ENCODE measurements at regions of chr9 and their contacts with region 1.

Region 1: DNA sequence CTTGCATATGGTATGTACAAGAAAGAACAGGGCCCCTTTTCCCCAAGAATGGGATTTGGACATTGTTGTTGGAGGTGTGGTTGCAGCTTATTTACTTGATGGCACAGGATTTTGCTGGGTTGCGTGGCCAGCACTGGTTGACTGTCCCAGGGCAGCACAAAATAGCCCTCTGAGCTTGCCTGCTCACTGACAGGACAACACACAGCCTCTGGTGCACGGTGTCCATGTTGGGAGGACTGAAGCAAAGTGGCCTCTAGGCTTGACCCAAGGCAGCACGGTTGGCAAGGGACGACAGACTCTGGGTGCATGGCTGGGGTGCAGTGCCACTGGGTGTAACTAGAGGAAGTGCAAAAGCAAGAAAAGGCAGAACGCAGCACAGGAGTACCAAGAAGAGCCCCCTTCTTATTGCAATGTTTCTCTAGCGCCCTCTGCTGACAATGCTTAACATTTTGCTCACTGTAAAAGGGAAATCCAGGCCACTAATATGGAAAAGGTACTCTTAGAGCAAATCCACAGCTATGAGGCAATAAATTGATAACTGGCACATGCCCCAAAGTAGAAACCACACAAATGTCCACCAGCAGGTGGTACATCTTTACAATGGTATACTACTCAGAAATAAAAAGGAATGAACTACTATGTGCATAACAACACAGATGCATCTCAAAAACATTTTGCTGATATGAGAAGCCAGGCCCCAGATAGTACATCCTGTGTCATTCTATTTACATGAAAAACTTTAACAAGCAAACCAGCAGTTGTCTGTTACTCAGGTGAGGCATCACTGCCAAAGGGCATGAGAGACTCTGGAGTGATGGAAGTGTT is 47.4 kb upstream of the BARX1 start:
- DNase-seq: peak; percentile 35
- H3K4me3 ChIP-seq: no peak overlapping the region
- H3K27ac ChIP-seq: no peak overlapping the region
- H3K4me1 ChIP-seq: peaks cover 6% of the 10 kb centered on the region
- H3K27me3 ChIP-seq: no peaks in the 10 kb centered on the region
- CTCF ChIP-seq: peak; percentile 54 to 76

Region 2: DNA sequence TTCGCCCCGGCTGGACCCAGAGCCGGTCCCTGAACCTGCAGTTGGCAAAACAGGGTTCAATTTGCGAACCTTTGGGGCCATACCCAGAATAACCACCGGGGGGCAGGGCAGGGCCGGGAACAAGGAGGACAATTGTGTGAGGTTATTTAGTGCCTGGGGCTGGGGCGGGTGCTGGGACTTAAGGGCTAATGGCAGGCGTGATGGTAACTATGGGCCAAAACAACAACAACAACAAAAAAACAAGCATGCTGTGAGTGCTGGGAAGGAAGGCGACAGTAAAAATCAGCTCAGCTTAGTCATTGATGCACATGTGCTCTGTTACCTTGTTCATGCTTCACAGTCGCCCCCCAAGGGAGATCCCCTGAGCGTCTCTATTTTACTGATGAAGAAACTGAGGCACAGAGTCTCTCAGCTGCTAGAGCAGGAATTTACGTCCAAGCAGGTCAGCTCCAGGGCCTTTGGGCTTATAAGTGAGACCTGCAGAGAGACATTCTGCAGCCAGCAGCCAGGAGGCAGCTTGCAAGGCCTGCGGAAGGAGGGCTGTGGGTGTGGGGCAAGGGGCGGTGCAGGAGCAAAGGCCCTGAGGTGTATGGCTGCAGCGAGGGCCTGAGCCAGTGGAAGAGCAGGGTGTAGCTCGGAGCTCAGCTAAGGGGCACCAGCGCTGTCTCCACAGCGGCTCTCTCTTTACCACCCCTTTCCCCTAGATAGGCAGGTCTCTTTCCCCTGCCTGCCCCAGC is 320.1 kb before region 1 on chr9:
- CTCF ChIA-PET with region 1: no interaction called
- dilution Hi-C with region 1: no loop called
- in situ Hi-C with region 1: no loop called
- intact Hi-C with region 1: loop called (anchors 1 kb)
- DNase-seq: peak; percentile 25
- H3K4me3 ChIP-seq: no peak overlapping the region
- H3K27ac ChIP-seq: no peak overlapping the region
- H3K4me1 ChIP-seq: no peaks in the 10 kb centered on the region
- H3K27me3 ChIP-seq: no peaks in the 10 kb centered on the region
- CTCF ChIP-seq: peak; percentile 69 to 82

Region 3: DNA sequence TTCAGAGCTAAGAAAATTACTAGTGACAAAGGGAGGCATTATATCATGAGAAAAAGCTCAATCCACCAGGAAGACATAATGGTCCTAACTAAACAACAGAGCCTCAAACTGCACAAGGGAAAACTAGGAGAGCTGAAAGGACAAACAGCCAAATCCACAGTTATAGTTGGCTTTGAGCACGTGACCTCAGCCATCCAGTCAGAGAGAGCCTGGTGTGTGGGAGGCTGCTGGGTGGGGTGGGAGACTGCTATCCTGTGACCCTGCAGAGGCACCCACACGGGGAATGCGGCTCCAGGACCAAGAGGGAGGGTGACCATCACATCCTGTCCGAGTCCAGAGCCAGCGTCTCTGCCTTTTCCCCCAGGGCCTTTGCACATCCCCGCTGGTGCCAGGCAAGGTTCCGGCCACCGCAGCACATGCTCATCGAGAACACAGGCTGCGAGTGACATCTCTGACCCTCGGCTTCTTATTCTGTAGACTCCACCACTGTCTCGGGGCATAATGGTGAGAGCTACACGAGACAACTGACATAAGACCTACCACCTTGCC is 281.0 kb before region 1 on chr9:
- CTCF ChIA-PET with region 1: no interaction called
- dilution Hi-C with region 1: no loop called
- in situ Hi-C with region 1: no loop called
- intact Hi-C with region 1: no loop called
- DNase-seq: no peak
- H3K4me3 ChIP-seq: no peak overlapping the region
- H3K27ac ChIP-seq: no peak overlapping the region
- H3K4me1 ChIP-seq: no peaks in the 10 kb centered on the region
- H3K27me3 ChIP-seq: no peaks in the 10 kb centered on the region
- CTCF ChIP-seq: no peak

Region 4: GRCh38 chr9:93827545-93828330 is 174.8 kb before region 1 on chr9:
- CTCF ChIA-PET with region 1: interaction called, 6 read pairs
- dilution Hi-C with region 1: no loop called
- in situ Hi-C with region 1: no loop called
- intact Hi-C with region 1: loop called (anchors 1 kb)
- DNase-seq: peak; percentile 24
- H3K4me3 ChIP-seq: no peak overlapping the region
- H3K27ac ChIP-seq: no peak overlapping the region
- H3K4me1 ChIP-seq: no peaks in the 10 kb centered on the region
- H3K27me3 ChIP-seq: no peaks in the 10 kb centered on the region
- CTCF ChIP-seq: peak; percentile 66 to 70

Region 5: GRCh38 chr9:93962561-93963440 is 39.7 kb before region 1 on chr9:
- CTCF ChIA-PET with region 1: interaction called, 4 read pairs
- dilution Hi-C with region 1: no loop called
- in situ Hi-C with region 1: no loop called
- intact Hi-C with region 1: loop called (anchors 1 kb)
- DNase-seq: peak; percentile 61
- H3K4me3 ChIP-seq: no peak overlapping the region
- H3K27ac ChIP-seq: no peak overlapping the region
- H3K4me1 ChIP-seq: peaks cover 5% of the 10 kb centered on the region
- H3K27me3 ChIP-seq: peaks cover 28% of the 10 kb centered on the region
- CTCF ChIP-seq: peak; percentile 77 to 79